ENCODE measurements at regions of chr13 and their contacts with region 1.

Region 1: DNA sequence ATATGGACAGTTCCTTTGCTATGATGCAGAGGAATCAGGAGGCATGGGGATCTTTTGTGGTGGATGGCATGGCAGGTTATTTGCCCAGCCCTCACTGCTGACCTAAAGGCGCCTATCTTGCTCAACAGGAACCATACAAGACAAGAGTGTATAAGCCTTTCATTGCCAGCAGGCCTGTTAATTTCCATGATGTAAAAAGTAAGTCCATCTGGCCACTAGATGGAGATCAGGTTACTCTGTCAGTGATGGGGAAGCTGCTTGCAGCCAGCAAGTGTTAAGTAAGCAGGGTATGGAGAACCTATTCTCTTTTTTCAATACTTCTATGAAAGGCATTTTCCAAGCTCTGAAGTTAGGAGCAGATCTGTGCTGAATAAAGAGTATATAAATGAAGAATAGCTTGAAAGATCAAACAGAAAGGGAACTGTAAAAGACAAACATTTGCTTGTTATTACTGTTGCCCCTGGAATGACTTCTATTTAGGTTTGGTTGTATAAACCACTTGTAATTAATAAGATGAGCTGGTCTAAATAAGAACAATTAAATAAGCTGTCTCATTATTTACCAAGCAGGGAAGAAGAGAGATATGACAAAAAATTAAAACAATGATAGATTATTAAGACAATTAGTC is 210.9 kb downstream of the RGCC start:
- DNase-seq: peak; percentile 90
- H3K4me3 Mint-ChIP-seq: no peak overlapping the region
- H3K27ac Mint-ChIP-seq: no peak overlapping the region
- H3K4me1 Mint-ChIP-seq: peaks cover 6% of the 10 kb centered on the region
- H3K27me3 Mint-ChIP-seq: no peaks in the 10 kb centered on the region
- CTCF ChIP-seq: peak; percentile 75

Region 2: GRCh38 chr13:41411522-41411921 is 256.7 kb before region 1 on chr13:
- CTCF ChIA-PET with region 1: interaction called, 9 read pairs
- POLR2A ChIA-PET with region 1: no interaction called
- intact Hi-C with region 1: loop called (anchors 1 kb)
- DNase-seq: peak; percentile 59
- H3K4me3 Mint-ChIP-seq: no peak overlapping the region
- H3K27ac Mint-ChIP-seq: no peak overlapping the region
- H3K4me1 Mint-ChIP-seq: no peaks in the 10 kb centered on the region
- H3K27me3 Mint-ChIP-seq: no peaks in the 10 kb centered on the region
- CTCF ChIP-seq: peak; percentile 54

Region 3: GRCh38 chr13:41678249-41678648 is 10.0 kb after region 1 on chr13:
- CTCF ChIA-PET with region 1: interaction called, 40 read pairs
- POLR2A ChIA-PET with region 1: interaction called, 4 read pairs
- intact Hi-C with region 1: no loop called
- DNase-seq: no peak
- H3K4me3 Mint-ChIP-seq: no peak overlapping the region
- H3K27ac Mint-ChIP-seq: no peak overlapping the region
- H3K4me1 Mint-ChIP-seq: no peaks in the 10 kb centered on the region
- H3K27me3 Mint-ChIP-seq: no peaks in the 10 kb centered on the region
- CTCF ChIP-seq: no peak

Region 4: GRCh38 chr13:41942462-41943094 is 274.3 kb after region 1 on chr13:
- CTCF ChIA-PET with region 1: interaction called, 5 read pairs
- POLR2A ChIA-PET with region 1: no interaction called
- intact Hi-C with region 1: loop called (anchors 10 kb)
- DNase-seq: peak; percentile 34
- H3K4me3 Mint-ChIP-seq: no peak overlapping the region
- H3K27ac Mint-ChIP-seq: no peak overlapping the region
- H3K4me1 Mint-ChIP-seq: no peaks in the 10 kb centered on the region
- H3K27me3 Mint-ChIP-seq: no peaks in the 10 kb centered on the region
- CTCF ChIP-seq: no peak

Region 5: DNA sequence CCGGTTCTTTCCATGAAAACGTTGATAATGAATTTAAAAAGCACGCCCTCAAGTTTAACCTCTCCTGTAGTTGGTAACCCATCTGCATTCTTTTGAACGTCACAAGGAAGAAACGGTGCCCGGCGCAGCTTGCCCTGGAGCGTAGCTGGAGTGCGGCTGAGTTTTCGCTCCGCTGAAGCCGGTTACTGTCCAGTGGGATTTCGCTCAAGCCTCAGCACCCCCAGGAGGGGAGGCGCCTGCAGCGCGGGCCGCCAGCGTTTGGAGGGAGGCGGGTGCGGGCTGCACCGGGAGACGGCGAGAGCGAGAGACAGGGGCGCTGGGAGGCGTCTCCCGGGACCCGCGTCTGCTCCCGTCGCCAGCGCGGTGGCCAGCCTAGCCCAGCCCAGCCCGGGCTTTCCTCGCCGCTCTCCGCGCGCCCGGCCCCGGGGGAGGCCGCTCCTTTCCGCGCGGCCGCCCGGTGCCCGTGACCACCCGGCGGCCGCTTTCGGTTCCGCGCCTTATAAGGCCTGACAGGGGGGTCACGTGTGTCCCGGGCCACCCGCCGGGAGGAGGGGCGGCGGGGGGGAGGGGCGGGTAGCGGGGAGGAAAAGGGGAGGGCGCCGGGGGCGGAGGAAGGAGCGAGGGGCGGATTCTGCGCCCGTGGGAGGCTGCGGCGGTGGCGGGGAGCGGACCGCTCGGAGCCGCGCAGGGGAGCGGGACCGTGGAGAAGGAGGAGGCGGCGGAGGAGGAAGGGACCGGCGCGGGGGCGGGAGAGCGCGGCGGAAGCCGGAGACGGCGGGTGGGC is 371.9 kb after region 1 on chr13:
- CTCF ChIA-PET with region 1: interaction called, 10 read pairs
- POLR2A ChIA-PET with region 1: interaction called, 9 read pairs
- intact Hi-C with region 1: loop called (anchors 1 kb)
- DNase-seq: peak; percentile 82
- H3K4me3 Mint-ChIP-seq: peak overlapping the region; percentile 84
- H3K27ac Mint-ChIP-seq: peak overlapping the region; percentile 84
- H3K4me1 Mint-ChIP-seq: peaks cover 6% of the 10 kb centered on the region
- H3K27me3 Mint-ChIP-seq: no peaks in the 10 kb centered on the region
- CTCF ChIP-seq: no peak

Region 6: DNA sequence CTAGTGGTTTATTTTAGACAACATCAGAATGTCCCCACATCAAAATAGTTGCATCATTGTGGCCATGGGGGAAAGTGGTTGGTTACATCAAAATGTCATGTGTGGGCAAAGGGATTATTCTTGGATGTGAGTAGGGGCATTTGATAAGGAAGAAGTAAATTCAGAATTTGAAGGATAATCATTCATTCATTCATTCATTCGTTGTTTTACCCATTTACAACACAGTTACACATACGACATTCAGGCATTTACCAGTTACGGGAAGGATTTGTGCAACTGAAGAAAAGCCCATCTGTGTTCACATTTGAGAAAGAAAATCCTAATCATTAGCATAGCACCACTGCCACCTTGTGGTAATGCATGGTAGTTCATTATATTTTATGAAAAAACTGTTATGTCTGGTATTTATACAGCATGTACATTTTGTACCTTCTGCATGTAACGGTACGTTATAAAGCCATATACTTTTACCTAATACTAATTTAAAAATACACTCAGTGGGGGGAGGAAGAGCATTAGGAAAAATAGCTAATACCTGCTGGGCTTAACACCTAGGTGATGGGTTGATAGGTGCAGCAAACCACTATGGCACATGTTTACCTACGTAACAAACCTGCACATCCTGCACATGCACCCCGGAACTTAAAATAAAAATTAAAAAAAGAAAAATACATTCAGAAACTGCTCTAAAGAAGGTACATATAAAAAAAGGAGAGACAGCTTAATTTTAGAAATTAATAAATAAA is 442.3 kb after region 1 on chr13:
- CTCF ChIA-PET with region 1: interaction called, 75 read pairs
- POLR2A ChIA-PET with region 1: interaction called, 10 read pairs
- intact Hi-C with region 1: loop called (anchors 1 kb)
- DNase-seq: peak; percentile 82
- H3K4me3 Mint-ChIP-seq: no peak overlapping the region
- H3K27ac Mint-ChIP-seq: peak overlapping the region; percentile 25
- H3K4me1 Mint-ChIP-seq: peaks cover 26% of the 10 kb centered on the region
- H3K27me3 Mint-ChIP-seq: no peaks in the 10 kb centered on the region
- CTCF ChIP-seq: peak; percentile 60